Sciatic nerve (tissue), 2 donors: ENCODE measurements at regions of chr20 and their contacts with region 1.

Region 1: DNA sequence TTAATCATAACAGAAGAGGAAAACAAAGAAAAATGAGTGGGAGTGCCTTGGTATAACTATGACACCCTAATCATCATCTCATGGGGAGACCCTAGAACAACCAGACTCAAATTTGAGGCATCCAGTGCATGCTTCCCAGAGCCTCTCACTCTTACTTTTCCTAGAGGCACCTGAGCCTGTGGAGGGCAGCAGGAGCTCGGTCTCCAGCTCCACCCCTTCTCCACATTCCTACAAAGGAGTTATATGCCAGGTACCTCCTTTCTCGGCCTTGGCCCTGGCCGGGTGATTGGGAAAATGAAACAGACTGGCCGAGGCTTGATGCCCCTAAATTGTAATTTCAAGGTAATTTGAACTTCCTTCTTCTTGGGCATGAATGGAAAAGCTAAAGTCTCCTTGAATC is 761.2 kb upstream of the CHD6 start:
- DNase-seq: no peak
- ATAC-seq: no peak

Region 2: DNA sequence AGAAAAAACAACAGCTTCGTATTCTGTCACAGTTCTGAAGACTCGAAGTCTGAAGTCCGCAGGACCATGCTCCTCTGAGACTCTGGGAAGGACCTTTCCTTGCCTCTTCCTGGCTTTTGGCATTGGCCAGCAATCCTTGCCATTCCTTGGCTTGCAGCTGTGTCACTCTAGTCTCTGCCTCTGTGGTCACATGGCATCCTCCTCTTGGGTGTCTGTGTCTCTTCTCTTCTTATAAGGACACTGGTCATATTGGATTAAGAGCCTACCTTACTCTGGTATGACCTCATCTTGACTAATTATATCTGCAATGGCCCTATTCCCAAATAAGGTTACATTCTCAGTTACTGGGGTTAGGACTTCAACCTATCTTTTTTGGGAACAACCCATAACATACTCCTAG is 1397.3 kb after region 1 on chr20:
- intact Hi-C with region 1: loop called (anchors 5 kb)
- DNase-seq: no peak
- ATAC-seq: no peak